Right cardiac atrium (tissue), 5 donors: ENCODE measurements at regions of chr6 and their contacts with region 1.

Region 1: DNA sequence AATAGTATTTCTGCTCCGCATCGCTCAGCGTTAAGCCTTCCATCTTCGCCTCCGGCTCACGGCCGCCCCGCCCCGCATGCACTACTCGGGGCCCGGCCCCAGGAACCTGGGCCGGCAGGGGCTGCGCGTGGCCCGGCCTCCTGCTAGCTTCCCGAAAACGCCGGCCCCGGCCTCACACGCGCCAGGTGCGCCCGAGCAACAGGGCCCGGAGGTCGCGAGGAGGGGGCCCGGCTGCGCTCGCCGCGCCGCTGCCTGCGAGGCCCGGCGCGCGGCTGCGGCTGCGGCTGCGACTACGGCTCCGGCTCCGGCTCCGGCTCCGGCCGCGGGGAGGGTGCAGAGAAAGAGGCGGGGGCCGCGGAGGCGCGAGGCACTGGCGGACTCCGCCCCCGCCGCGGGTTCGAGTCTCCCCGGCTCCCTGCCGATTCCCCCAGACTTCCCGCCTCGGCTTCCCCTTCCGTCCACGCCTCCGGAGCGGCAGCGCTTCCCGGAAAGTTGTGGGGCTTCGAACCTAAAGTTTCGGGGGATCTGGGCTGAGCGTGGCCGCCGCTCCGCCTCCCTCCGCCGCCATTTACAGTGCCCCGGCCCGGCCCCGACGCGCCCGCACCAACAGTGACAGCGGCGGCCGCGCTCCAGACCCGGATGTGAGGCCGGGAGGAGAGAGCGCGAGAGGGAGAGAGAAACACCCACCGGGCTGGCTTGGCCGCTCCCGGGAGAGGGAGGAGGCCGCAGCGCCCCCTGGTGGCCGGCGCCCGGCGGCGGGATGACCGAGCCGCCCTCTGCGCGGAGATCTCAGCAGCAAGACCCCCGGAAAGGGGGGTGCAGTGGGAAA is at the start of gene REPS1:
- DNase-seq: peak; percentile 93 to 97 (median 96)
- ATAC-seq: peak; percentile 98 to 99
- H3K4me3 ChIP-seq: peak within 1 kb of the TSS; percentile 95
- H3K27ac ChIP-seq: peak within 1 kb of the TSS; percentile 67
- H3K4me1 ChIP-seq: peaks cover 7% of the 10 kb centered on the region
- H3K27me3 ChIP-seq: no peaks in the 10 kb centered on the region
- total RNA-seq, gene REPS1: 35.3 to 40.9 (median 37.3) TPM

Region 2: DNA sequence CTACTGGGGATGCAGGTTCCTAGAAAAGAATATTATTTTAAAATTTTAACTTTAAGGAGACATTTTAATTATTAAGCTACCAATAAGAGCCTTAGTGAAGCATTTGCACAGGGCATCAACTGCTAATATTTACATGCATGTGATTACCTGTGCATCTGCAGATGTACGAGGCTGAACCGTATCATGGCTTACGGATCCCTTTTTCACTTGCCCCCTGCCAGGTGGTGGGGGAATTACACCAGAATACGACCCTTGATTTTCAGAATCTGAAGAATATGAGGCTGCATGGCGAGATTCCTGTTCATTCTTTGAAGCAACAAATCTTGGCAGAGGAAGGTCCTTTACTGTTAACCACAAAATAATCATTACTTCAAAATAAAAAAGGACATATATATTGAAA is 42.5 kb before region 1 on chr6:
- intact Hi-C with region 1: loop called in 1 of 4 experiments (anchors 5 kb)
- DNase-seq: no peak
- ATAC-seq: no peak
- H3K4me3 ChIP-seq: no peak overlapping the region
- H3K27ac ChIP-seq: no peak overlapping the region
- H3K4me1 ChIP-seq: peaks cover 2% of the 10 kb centered on the region
- H3K27me3 ChIP-seq: no peaks in the 10 kb centered on the region